Activated CD4-positive, alpha-beta memory T cell treated with anti-CD3 and anti-CD28 coated beads for 36 hours (primary cell): ENCODE measurements at regions of chr6 and their contacts with region 1.

Region 1: DNA sequence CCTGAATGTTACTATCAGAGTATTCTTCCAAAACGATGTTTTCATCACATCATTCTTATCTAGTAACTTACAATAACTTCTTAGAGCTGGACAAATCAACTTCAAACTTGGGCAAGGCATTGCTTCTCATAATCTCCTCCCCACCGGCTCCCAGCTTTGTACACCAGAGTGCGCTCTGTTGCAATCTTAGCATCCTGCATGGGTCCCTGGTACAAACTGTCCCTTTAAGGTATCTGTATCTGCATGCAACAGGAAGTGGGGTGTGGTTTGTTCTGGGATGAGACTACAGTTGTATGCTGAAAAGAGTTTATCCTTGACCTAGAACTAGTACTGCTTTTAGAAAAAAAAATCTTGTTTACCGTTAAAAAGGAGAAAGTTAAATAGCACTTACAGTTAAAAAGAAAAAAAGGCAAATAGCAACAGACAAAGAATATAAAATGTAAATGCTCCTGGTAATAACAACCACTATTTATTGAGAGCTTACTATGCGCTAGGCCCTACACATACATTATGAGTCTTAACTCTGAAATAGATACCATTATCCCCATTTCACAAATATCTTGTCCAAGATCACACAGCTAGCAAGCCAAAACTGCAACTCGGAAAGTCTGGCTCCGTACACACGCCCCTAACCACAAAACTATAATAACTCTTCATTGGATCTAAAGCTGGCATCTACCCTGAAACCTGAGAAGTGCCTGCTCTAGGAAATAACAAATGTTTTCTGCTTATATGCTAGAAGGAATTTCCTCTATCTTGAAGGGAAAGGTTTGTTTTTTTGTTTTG is 9.8 kb upstream of the HECA start:
- DNase-seq: peak; percentile 89
- H3K4me3 Mint-ChIP-seq: peak overlapping the region; percentile 43
- H3K27ac Mint-ChIP-seq: peak overlapping the region; percentile 93
- H3K4me1 Mint-ChIP-seq: peaks cover 52% of the 10 kb centered on the region
- H3K27me3 Mint-ChIP-seq: no peaks in the 10 kb centered on the region

Region 2: DNA sequence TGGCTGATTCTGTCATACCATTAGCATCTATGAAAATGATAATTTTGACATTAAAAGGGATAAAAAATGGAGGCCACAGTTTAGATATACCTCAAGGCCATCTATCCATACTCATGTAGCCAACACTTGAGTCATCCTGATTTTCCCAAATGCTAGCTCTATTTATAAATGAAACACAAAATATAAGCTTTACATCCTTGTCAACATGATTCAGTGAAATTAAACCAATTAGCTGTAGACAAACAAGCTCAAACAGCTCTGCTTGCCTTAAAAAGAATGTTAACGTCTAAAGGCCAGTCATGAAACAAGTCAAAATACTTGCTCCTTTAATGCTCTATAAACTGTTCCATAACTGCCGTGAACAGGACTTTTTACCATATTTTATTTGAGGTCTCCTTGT is 56.2 kb before region 1 on chr6:
- CTCF ChIA-PET with region 1: no interaction called
- POLR2A ChIA-PET with region 1: no interaction called
- intact Hi-C with region 1: no loop called
- DNase-seq: no peak
- H3K4me3 Mint-ChIP-seq: no peak overlapping the region
- H3K27ac Mint-ChIP-seq: no peak overlapping the region
- H3K4me1 Mint-ChIP-seq: no peaks in the 10 kb centered on the region
- H3K27me3 Mint-ChIP-seq: no peaks in the 10 kb centered on the region

Region 3: GRCh38 chr6:139109558-139109957 is 15.5 kb before region 1 on chr6:
- CTCF ChIA-PET with region 1: interaction called, 11 read pairs
- POLR2A ChIA-PET with region 1: interaction called, 7 read pairs
- intact Hi-C with region 1: no loop called
- DNase-seq: peak; percentile 72
- H3K4me3 Mint-ChIP-seq: no peak overlapping the region
- H3K27ac Mint-ChIP-seq: no peak overlapping the region
- H3K4me1 Mint-ChIP-seq: peaks cover 47% of the 10 kb centered on the region
- H3K27me3 Mint-ChIP-seq: no peaks in the 10 kb centered on the region

Region 4: GRCh38 chr6:139153855-139154254 is 28.8 kb after region 1 on chr6:
- CTCF ChIA-PET with region 1: interaction called, 4 read pairs
- POLR2A ChIA-PET with region 1: interaction called, 3 read pairs
- intact Hi-C with region 1: loop called (anchors 1 kb)
- DNase-seq: no peak
- H3K4me3 Mint-ChIP-seq: peak overlapping the region; percentile 37
- H3K27ac Mint-ChIP-seq: peak overlapping the region; percentile 98
- H3K4me1 Mint-ChIP-seq: peaks cover 85% of the 10 kb centered on the region
- H3K27me3 Mint-ChIP-seq: no peaks in the 10 kb centered on the region

Region 5: DNA sequence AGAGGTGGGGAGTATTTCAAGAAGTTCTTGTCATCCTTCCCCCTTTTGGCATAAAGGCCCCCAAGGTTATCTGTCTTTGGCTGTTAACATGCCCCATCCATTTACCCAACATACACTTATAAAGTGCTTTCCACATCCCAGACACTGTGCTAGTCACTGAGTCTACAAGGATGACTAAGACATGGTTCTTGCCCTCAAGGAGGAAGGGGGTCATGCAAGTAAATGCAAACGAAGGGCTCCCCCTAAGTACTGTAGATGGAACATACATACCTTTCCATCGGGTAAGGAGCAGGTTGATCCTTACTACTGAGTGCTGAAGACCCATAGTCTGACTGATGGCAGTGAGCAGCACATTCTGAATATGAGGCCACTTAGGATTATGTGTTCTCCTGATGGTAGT is 48.1 kb after region 1 on chr6:
- CTCF ChIA-PET with region 1: interaction called, 5 read pairs
- POLR2A ChIA-PET with region 1: no interaction called
- intact Hi-C with region 1: loop called (anchors 1 kb)
- DNase-seq: no peak
- H3K4me3 Mint-ChIP-seq: no peak overlapping the region
- H3K27ac Mint-ChIP-seq: peak overlapping the region; percentile 78
- H3K4me1 Mint-ChIP-seq: peaks cover 90% of the 10 kb centered on the region
- H3K27me3 Mint-ChIP-seq: no peaks in the 10 kb centered on the region

Region 6: GRCh38 chr6:139219271-139219729 is 94.2 kb after region 1 on chr6:
- CTCF ChIA-PET with region 1: interaction called, 37 read pairs
- POLR2A ChIA-PET with region 1: no interaction called
- intact Hi-C with region 1: loop called (anchors 1 kb)
- DNase-seq: peak; percentile 83
- H3K4me3 Mint-ChIP-seq: peak overlapping the region; percentile 27
- H3K27ac Mint-ChIP-seq: no peak overlapping the region
- H3K4me1 Mint-ChIP-seq: peaks cover 7% of the 10 kb centered on the region
- H3K27me3 Mint-ChIP-seq: no peaks in the 10 kb centered on the region

Region 7: DNA sequence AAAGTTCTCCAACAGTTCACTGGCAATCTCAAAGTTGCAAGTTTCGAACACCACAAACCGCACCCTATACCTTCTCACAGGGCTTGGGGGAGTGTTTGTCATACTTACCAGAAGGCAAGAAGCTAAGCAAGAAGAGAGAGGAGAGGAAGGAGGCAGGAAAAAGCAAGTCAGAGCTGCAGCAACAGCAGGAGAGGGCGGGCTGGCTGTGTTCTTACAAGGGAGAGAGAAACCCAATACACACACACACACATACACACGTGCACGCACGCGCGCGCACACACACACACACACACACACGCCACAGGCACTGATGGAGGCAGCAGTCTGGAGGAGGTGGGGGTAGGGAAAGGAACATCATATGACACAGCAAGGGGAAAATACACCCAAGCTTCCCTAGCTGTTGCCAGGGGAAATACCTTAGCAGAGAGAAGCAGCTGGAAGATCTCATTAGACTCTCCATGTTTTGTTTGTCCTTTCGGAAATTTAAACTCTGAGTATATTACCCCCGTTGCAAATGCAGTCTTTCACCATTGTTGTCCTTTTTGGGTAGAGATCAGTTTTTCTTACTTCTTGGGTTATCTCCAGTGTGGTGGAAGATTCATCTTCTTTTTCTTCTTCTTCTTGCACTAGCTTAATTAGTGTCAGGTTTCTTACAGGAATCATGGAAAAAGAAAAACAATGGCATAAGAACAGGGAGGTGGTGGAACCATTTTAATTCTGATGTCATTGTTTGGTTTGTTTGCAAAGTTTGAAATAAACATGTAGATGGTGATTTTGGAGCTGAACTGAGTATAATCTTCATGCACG is 166.9 kb after region 1 on chr6 and contains the start of gene TXLNB:
- CTCF ChIA-PET with region 1: interaction called, 8 read pairs
- POLR2A ChIA-PET with region 1: interaction called, 7 read pairs
- intact Hi-C with region 1: loop called (anchors 1 kb)
- DNase-seq: peak; percentile 92
- H3K4me3 Mint-ChIP-seq: peak within 1 kb of the TSS; percentile 72
- H3K27ac Mint-ChIP-seq: peak within 1 kb of the TSS; percentile 95
- H3K4me1 Mint-ChIP-seq: peaks cover 56% of the 10 kb centered on the region
- H3K27me3 Mint-ChIP-seq: no peaks in the 10 kb centered on the region
- total RNA-seq, gene TXLNB: 0.17 to 0.31 TPM

Region 8: GRCh38 chr6:139369568-139370282 is 244.6 kb after region 1 on chr6:
- CTCF ChIA-PET with region 1: interaction called, 41 read pairs
- POLR2A ChIA-PET with region 1: interaction called, 5 read pairs
- intact Hi-C with region 1: loop called (anchors 1 kb)
- DNase-seq: peak; percentile 14
- H3K4me3 Mint-ChIP-seq: peak overlapping the region; percentile 15
- H3K27ac Mint-ChIP-seq: peak overlapping the region; percentile 51
- H3K4me1 Mint-ChIP-seq: peaks cover 39% of the 10 kb centered on the region
- H3K27me3 Mint-ChIP-seq: no peaks in the 10 kb centered on the region